Mammary epithelial cell (primary cell): ENCODE measurements at regions of chr19 and their contacts with region 1.

Region 1: DNA sequence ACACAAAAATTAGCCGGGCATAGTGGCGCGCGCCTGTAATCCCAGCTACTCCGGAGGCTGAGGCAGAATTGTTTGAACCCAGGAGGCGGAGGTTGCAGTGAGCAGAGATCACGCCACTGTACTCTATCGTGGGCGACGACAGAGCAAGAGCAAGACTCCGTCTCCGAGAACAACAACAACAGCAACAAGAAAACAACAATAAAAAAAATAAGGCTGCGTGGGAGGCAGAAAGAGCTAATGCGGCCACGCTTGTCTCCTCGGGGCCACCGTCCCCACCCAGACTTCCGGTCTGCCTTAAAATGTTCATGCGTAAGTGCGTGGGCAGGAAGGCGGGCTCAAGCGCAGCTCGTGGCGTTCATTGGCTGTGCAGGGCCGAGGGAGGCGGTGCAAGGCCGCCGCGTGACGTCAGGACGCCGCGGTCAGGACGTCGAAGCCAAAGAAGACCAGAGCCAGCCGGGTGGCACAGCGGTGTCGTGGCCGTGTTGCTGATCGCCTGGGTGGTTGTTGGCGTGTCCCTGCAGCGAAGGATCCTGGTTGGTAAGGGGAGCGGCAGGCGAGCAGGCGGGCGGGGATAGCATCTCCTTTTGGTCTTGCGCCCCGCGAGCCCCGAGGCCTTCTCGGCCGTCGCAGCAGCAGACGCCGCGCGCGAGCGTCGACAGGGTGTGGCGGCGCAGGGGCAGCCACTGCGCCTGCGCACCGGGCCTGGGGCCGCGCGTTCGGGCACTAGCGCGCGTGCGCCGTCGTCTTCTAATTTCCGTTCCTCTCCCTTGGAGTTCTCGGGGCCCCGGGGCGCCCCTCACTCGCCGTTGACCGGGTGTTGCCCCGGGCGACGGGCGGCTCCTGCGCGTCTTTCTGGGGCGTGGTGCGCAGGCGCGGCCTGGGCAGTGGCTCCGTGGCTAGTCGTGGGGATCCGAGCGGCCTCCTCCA is at the start of gene LENG8:
- DNase-seq: peak; percentile 97
- H3K4me3 ChIP-seq: peak within 1 kb of the TSS; percentile 78 to 94 (median 92)
- H3K27ac ChIP-seq: peak within 1 kb of the TSS; percentile 93
- H3K4me1 ChIP-seq: peaks cover 16% of the 10 kb centered on the region
- H3K27me3 ChIP-seq: no peaks in the 10 kb centered on the region
- CTCF ChIP-seq: no peak
- total RNA-seq, gene LENG8: 68.3 to 212 TPM

Region 2: DNA sequence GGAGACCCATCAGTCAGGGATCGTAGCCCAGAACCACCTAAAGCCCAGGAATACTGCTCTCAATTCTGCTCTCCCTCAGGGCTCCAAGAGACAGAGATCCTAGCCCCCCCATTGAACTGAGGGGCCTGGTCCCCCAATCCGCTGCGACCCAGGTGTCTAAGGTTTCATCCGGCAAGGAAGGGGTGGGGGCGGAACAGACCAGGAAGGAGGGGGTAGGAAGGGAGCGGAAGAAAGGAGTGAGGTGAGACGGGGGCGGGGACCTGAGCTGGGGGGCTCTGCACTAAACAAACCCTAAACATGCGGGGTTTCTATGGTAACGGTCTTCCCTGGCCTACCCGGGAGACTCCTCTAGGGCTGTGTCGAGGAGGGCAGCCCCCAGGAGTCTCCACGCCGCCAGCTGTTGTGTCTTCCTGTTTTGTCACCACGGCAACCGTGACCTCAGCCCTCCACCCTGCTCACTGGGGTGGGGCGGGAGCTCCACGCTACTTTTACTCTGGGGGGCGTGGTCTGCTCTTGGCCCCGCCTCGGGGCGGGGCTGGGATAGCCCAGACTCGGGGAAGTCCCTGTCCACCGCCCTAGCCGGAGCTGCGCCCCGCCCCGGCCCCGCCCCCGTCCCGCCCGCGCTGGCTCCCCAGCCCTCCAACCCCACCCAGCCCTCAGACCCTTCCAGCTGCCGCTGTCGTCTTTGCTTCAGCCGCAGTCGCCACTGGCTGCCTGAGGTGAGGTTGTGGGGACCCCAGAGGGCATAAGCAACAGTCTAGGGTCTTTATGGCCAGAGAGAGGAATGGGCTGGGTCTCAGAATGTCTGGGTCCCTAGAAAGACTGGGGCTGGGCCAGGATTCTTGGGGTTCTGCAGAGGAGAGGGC is 581.6 kb before region 1 on chr19 and contains the start of gene MYADM:
- CTCF ChIA-PET with region 1: no interaction called
- dilution Hi-C with region 1: no loop called
- in situ Hi-C with region 1: no loop called
- intact Hi-C with region 1: loop called (anchors 2 kb)
- DNase-seq: peak; percentile 97
- H3K4me3 ChIP-seq: peak within 1 kb of the TSS; percentile 45 to 69 (median 67)
- H3K27ac ChIP-seq: peak within 1 kb of the TSS; percentile 83
- H3K4me1 ChIP-seq: peaks cover 11% of the 10 kb centered on the region
- H3K27me3 ChIP-seq: no peaks in the 10 kb centered on the region
- CTCF ChIP-seq: no peak
- total RNA-seq, gene MYADM: 26.5 to 64.1 TPM

Region 3: DNA sequence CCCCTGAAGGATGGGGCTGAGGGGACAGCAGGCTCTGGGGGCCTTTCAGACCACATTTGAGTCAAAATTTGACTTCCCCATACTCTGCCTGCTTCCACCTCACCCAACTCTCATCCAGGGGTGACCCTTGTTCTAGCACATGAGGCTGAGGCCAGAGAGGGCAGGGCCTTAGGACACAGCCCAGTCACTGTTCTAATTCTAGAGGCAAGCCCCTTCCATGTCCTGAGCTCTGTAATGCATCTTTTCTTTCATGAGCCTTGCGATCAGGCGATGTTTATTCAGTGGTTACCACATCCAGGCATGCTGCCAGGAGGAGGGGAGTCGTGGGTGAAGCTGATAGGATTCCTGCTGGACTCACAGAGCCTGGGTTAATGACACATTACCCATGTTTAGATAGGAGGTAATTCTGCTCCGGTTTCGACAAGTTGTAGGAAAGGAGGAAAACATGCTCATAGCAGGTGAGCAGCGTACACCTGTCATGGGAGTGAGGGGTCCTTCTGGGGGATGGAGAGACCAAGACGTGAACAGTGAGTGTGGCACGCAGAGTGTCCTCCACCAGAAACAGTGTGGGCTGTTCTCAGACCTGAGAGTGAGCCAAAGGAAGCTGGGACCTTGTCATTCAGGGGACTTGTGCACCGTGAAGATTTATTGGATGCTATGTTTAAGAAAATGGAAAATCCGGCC is 239.1 kb before region 1 on chr19:
- CTCF ChIA-PET with region 1: no interaction called
- dilution Hi-C with region 1: no loop called
- in situ Hi-C with region 1: loop called in 1 of 2 experiments (anchors 25 kb)
- intact Hi-C with region 1: no loop called
- DNase-seq: peak; percentile 92
- H3K4me3 ChIP-seq: no peak overlapping the region
- H3K27ac ChIP-seq: peak overlapping the region; percentile 14
- H3K4me1 ChIP-seq: peaks cover 28% of the 10 kb centered on the region
- H3K27me3 ChIP-seq: no peaks in the 10 kb centered on the region
- CTCF ChIP-seq: no peak

Region 4: GRCh38 chr19:54432138-54432738 is 16.8 kb before region 1 on chr19:
- CTCF ChIA-PET with region 1: no interaction called
- dilution Hi-C with region 1: no loop called
- in situ Hi-C with region 1: no loop called
- intact Hi-C with region 1: loop called (anchors 1 kb)
- DNase-seq: peak; percentile 78
- H3K4me3 ChIP-seq: no peak overlapping the region
- H3K27ac ChIP-seq: no peak overlapping the region
- H3K4me1 ChIP-seq: peaks cover 15% of the 10 kb centered on the region
- H3K27me3 ChIP-seq: no peaks in the 10 kb centered on the region
- CTCF ChIP-seq: no peak